ENCODE measurements at regions of chr16 and their contacts with region 1.

Region 1: DNA sequence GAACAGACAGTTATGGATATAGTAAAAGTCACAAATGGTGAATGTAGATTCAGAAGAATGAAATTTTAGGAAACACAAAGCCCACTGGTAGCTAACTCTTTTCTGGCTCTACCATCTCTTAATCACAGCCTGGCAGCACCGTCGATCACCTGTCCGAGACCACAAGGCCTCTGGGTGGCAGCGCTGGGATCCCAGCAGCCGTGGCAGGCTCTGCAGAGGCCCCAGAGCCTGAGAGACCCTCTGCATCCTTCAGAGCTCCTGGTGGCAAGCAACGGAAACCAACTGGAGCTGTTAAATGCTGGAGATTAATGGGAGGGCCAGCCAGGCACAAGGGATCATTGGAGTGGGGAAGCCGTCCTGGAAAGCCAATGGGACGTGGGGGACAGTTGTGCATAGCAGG is 26.3 kb downstream of the LAT start:
- DNase-seq: peak in 1 of 4 experiments; percentile 47
- ATAC-seq: no peak; the same call in 2 of the 3 replicates
- H3K4me3 ChIP-seq: no peak overlapping the region
- H3K27ac ChIP-seq: peak overlapping the region; percentile 65; the same call in 2 of the 3 replicates
- H3K4me1 ChIP-seq: peaks cover 45 to 54% of the 10 kb centered on the region in 2 experiments
- H3K27me3 ChIP-seq: no peaks in the 10 kb centered on the region
- CTCF ChIP-seq: peak; percentile 18 to 28 (median 24); a peak in 2 of 6 replicates
- EP300 ChIP-seq: no peak
- POLR2A ChIP-seq: no peak
- RAD21 ChIP-seq: 0 out of 4 replicates have a peak, but pooled peaks of 1 of the 2 experiments have one; percentile 15

Region 2: GRCh38 chr16:28958836-28959235 is 52.3 kb before region 1 on chr16:
- CTCF ChIA-PET with region 1: no interaction called
- POLR2A ChIA-PET with region 1: no interaction called
- in situ Hi-C with region 1: no loop called
- intact Hi-C with region 1: no loop called
- DNase-seq: no peak
- ATAC-seq: no peak; the same call in 2 of the 3 replicates
- H3K4me3 ChIP-seq: no peak overlapping the region
- H3K27ac ChIP-seq: no peak overlapping the region
- H3K4me1 ChIP-seq: no peaks in the 10 kb centered on the region
- H3K27me3 ChIP-seq: no peaks in the 10 kb centered on the region
- CTCF ChIP-seq: no peak
- EP300 ChIP-seq: no peak
- POLR2A ChIP-seq: no peak
- RAD21 ChIP-seq: no peak

Region 3: DNA sequence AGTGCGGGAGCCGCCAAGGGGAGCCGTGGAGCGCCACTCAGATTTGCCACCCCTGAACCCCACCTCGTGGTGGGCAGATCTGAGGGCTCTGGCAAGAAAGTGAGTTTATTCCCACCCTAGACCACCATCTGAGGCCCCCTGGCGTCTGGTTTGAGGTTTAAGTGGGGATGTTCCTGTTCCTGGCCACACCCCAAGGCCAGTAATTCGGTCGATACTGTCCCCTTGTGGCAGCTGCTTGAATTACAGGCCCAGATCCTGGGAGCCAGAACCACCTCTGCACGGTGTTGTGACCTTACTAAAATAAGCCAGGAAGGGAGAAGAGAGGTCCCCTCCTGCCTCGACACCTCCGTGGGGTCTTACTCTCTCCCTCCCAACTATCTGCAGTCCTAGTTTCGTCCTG is 29.6 kb before region 1 on chr16:
- CTCF ChIA-PET with region 1: no interaction called
- POLR2A ChIA-PET with region 1: no interaction called
- in situ Hi-C with region 1: no loop called
- intact Hi-C with region 1: no loop called
- DNase-seq: peak; percentile 62 to 84 (median 76)
- ATAC-seq: peak; percentile 88
- H3K4me3 ChIP-seq: no peak overlapping the region
- H3K27ac ChIP-seq: no peak overlapping the region
- H3K4me1 ChIP-seq: peaks cover 2 to 37% of the 10 kb centered on the region in 2 experiments; a peak in 1 of 5 replicates
- H3K27me3 ChIP-seq: no peaks in the 10 kb centered on the region
- CTCF ChIP-seq: peak; percentile 88 to 98 (median 93)
- EP300 ChIP-seq: no peak
- POLR2A ChIP-seq: no peak
- RAD21 ChIP-seq: peak; percentile 14 to 58; a peak in 3 of 4 replicates

Region 4: GRCh38 chr16:28999577-28999976 is 11.5 kb before region 1 on chr16:
- CTCF ChIA-PET with region 1: no interaction called
- POLR2A ChIA-PET with region 1: no interaction called
- in situ Hi-C with region 1: no loop called
- intact Hi-C with region 1: no loop called
- DNase-seq: no peak
- ATAC-seq: no peak
- H3K4me3 ChIP-seq: no peak overlapping the region
- H3K27ac ChIP-seq: no peak overlapping the region
- H3K4me1 ChIP-seq: peaks cover under 1 to 6% of the 10 kb centered on the region in 2 experiments; a peak in 4 of 5 replicates
- H3K27me3 ChIP-seq: no peaks in the 10 kb centered on the region
- CTCF ChIP-seq: no peak
- EP300 ChIP-seq: no peak
- POLR2A ChIP-seq: no peak
- RAD21 ChIP-seq: no peak

Region 5: GRCh38 chr16:29022196-29022595 is 11.1 kb after region 1 on chr16:
- CTCF ChIA-PET with region 1: no interaction called
- POLR2A ChIA-PET with region 1: interaction called, 16 read pairs
- in situ Hi-C with region 1: no loop called
- intact Hi-C with region 1: no loop called
- DNase-seq: no peak
- ATAC-seq: no peak
- H3K4me3 ChIP-seq: no peak overlapping the region
- H3K27ac ChIP-seq: no peak overlapping the region
- H3K4me1 ChIP-seq: peaks cover 12 to 21% of the 10 kb centered on the region in 2 experiments; a peak in 4 of 5 replicates
- H3K27me3 ChIP-seq: no peaks in the 10 kb centered on the region
- CTCF ChIP-seq: no peak
- EP300 ChIP-seq: no peak
- POLR2A ChIP-seq: no peak
- RAD21 ChIP-seq: no peak

Region 6: GRCh38 chr16:30091474-30092372 is 1080.6 kb after region 1 on chr16 and contains the start of gene TBX6:
- CTCF ChIA-PET with region 1: no interaction called
- POLR2A ChIA-PET with region 1: no interaction called
- in situ Hi-C with region 1: no loop called
- intact Hi-C with region 1: no loop called
- DNase-seq: peak; percentile 85 to 96 (median 89)
- ATAC-seq: peak; percentile 89
- H3K4me3 ChIP-seq: peak within 1 kb of the TSS; percentile 49
- H3K27ac ChIP-seq: peak within 1 kb of the TSS; percentile 85
- H3K4me1 ChIP-seq: peaks cover 34 to 72% of the 10 kb centered on the region in 2 experiments
- H3K27me3 ChIP-seq: no peaks in the 10 kb centered on the region
- CTCF ChIP-seq: peak; percentile 74 to 92 (median 88)
- EP300 ChIP-seq: 0 out of 2 replicates have a peak, but pooled peaks have one; percentile 41
- POLR2A ChIP-seq: peak; percentile 80
- RAD21 ChIP-seq: peak; percentile 71 to 77
- polyA plus RNA-seq, gene TBX6: not detected

Measured in K562 (cell line).